ENCODE measurements at regions of chr17 and their contacts with region 1.

Region 1: DNA sequence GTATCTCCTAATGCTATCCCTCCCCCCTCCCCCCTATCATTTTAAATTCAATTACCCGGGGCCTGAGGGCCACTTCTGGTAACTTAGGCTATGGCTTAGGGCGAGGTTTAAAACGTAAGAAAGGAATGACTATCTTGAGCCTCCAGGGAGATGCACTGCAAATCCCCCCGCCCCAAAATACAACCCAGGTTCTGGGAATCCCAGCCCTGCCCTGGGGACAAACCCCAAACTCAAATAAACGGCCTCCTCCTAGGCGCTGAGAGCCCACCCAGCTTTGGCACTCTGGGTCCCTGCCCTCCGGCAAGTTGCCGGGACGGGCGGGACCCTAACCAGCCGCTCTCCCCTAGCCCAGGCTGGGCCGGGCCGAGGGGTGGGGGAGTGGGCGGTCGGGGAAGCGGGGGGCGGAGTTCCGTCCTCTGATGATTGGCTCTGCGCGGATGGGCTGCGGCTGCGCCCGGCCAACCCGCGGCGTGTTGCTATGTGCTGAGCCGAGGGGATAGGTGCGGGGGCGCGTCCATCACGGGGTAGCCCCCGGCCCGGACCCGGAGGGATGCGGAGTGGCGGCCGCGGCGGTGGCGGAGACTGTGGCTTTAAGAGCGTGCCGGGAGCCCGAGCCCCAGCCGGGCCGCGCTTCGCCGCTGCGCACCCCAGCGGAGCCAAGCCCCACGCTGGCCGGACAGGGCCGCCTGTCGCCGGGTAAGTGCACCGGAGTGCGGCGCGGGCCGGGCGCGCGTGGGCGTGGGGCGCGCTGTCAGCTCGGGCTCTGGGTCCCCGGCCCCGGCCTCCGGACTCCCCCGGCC is at the start of gene YPEL2:
- DNase-seq: peak; percentile 96 to 97
- H3K4me3 ChIP-seq: peak within 1 kb of the TSS; percentile 77 to 89
- H3K27ac ChIP-seq: peak within 1 kb of the TSS; percentile 88
- H3K4me1 ChIP-seq: peaks cover 57% of the 10 kb centered on the region
- H3K27me3 ChIP-seq: no peaks in the 10 kb centered on the region
- CTCF ChIP-seq: no peak
- POLR2A ChIP-seq: peak; percentile 39 to 76
- total RNA-seq, gene YPEL2: 16.7 TPM

Region 2: GRCh38 chr17:59372138-59372857 is 41.0 kb after region 1 on chr17:
- intact Hi-C with region 1: loop called (anchors 2 kb)
- DNase-seq: no peak
- H3K4me3 ChIP-seq: peak overlapping the region in 1 of 2 donors; percentile 27
- H3K27ac ChIP-seq: peak overlapping the region; percentile 87
- H3K4me1 ChIP-seq: peaks cover 99% of the 10 kb centered on the region
- H3K27me3 ChIP-seq: no peaks in the 10 kb centered on the region
- CTCF ChIP-seq: no peak
- POLR2A ChIP-seq: no peak

Region 3: GRCh38 chr17:59406808-59407429 is 75.6 kb after region 1 on chr17:
- intact Hi-C with region 1: no loop called
- DNase-seq: no peak
- H3K4me3 ChIP-seq: no peak overlapping the region
- H3K27ac ChIP-seq: peak overlapping the region; percentile 43
- H3K4me1 ChIP-seq: peaks cover 16% of the 10 kb centered on the region
- H3K27me3 ChIP-seq: no peaks in the 10 kb centered on the region
- CTCF ChIP-seq: no peak
- POLR2A ChIP-seq: no peak

Region 4: DNA sequence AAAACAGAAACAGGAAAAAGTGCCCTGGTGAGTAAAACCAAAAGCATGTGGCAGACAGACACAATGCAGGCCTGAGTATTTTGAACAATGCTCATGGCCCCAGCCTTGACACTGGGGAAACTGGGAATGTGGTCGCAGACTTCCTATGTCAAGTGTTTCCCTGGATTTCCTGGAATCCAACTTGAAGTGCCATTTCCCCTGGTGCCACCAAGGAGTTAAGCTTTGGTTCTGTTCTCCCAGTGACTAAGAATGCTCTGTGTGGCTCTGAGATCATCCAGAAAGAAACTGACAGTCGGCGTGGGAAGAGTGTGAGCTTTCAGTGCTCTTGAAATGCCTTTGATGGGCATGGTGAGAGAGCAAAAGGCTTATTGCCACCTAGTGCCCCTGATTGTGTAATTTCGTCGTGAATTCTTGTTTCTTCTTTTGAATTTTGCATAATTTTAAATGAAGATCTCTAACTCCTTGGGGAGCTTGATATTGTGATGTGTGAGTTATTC is 96.1 kb after region 1 on chr17:
- intact Hi-C with region 1: loop called (anchors 5 kb)
- DNase-seq: no peak
- H3K4me3 ChIP-seq: no peak overlapping the region
- H3K27ac ChIP-seq: peak overlapping the region; percentile 83
- H3K4me1 ChIP-seq: peaks cover 65% of the 10 kb centered on the region
- H3K27me3 ChIP-seq: no peaks in the 10 kb centered on the region
- CTCF ChIP-seq: no peak
- POLR2A ChIP-seq: no peak

Region 5: GRCh38 chr17:59440784-59441441 is 109.6 kb after region 1 on chr17:
- intact Hi-C with region 1: loop called (anchors 2 kb)
- DNase-seq: peak in 1 of 2 donors; percentile 91
- H3K4me3 ChIP-seq: no peak overlapping the region
- H3K27ac ChIP-seq: peak overlapping the region; percentile 38
- H3K4me1 ChIP-seq: no peaks in the 10 kb centered on the region
- H3K27me3 ChIP-seq: no peaks in the 10 kb centered on the region
- CTCF ChIP-seq: peak; percentile 74 to 92 (median 89)
- POLR2A ChIP-seq: no peak